ENCODE measurements at regions of chr5 and their contacts with region 1.

Region 1: GRCh38 chr5:40879163-40879942 is 29.9 kb upstream of the C7 start:
- DNase-seq: peak in 1 of 2 donors; percentile 47
- ATAC-seq: peak in 1 of 3 donors; percentile 59
- H3K4me3 ChIP-seq: no peak overlapping the region
- H3K4me3 Mint-ChIP-seq: no peak overlapping the region
- H3K27ac ChIP-seq: no peak overlapping the region
- H3K27ac Mint-ChIP-seq: no peak overlapping the region
- H3K4me1 ChIP-seq: no peaks in the 10 kb centered on the region
- H3K4me1 Mint-ChIP-seq: no peaks in the 10 kb centered on the region
- H3K27me3 ChIP-seq: no peaks in the 10 kb centered on the region
- H3K27me3 Mint-ChIP-seq: peaks cover 4 to 7% of the 10 kb centered on the region in 2 donors
- CTCF ChIP-seq: peak; percentile 85

Region 2: DNA sequence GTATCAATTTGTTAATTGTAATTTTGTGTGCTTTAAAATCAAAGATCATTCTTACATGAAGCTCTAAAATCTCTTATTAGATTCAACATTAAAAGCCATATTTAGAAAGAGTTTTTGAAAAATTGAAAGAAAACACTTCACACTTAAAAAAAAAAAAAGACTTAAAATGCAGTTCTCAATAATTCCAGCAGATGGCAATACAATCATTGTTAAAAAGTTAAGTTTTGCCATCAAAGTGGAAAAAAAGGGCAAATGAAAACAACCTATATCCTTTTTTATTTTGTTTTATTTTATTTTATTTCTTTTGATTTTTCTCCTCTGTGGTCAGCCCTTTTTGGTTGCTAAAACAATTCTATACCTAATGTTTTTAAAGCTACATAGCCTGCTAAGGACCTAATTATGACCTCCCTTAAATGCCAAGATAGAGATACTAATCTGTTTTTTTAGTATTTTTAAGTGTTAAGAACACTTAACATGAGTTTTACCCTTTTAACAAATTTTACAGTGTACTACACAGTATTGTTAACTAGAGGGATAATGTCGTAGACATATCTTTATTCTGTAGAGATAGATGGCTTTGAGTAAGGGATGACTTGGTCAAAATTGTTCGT is 1300.4 kb before region 1 on chr5:
- intact Hi-C with region 1: loop called (anchors 5 kb)
- DNase-seq: peak in 1 of 2 donors; percentile 57
- ATAC-seq: no peak
- H3K4me3 ChIP-seq: no peak overlapping the region
- H3K4me3 Mint-ChIP-seq: no peak overlapping the region
- H3K27ac ChIP-seq: no peak overlapping the region
- H3K27ac Mint-ChIP-seq: no peak overlapping the region
- H3K4me1 ChIP-seq: no peaks in the 10 kb centered on the region
- H3K4me1 Mint-ChIP-seq: no peaks in the 10 kb centered on the region
- H3K27me3 ChIP-seq: no peaks in the 10 kb centered on the region
- H3K27me3 Mint-ChIP-seq: peaks cover 5 to 22% of the 10 kb centered on the region in 2 donors
- CTCF ChIP-seq: peak; percentile 92

Region 3: DNA sequence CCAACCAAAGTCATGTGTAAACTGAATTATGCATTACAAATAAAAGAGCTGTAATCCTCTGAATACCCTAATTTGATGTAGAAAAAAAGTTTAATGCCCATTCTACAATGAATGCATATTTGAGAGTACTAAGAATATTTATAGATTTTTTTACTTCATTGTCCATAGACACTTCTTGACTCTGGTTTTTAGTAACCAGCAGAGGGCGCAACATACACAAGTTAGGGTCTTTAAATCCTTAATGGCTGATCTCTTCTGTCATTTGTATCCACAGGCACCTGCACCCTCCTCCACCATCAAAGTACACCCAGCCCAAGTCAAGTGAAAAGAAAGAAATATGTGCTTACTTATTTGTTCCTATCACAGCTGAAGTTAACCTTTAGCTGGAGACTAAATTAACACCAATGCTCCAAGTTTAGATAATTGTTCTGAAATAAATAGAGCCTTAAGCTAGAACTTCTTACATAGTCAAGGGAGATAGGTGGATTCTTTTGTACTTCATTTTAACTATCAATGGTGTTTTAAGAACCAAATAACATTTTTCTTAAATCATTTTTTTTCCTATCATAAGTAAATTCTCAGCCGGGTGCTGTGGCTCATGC is 930.4 kb before region 1 on chr5:
- intact Hi-C with region 1: loop called (anchors 2 kb)
- DNase-seq: peak; percentile 15 to 87
- ATAC-seq: peak; percentile 87 to 90 (median 89)
- H3K4me3 ChIP-seq: no peak overlapping the region
- H3K4me3 Mint-ChIP-seq: no peak overlapping the region
- H3K27ac ChIP-seq: no peak overlapping the region
- H3K27ac Mint-ChIP-seq: no peak overlapping the region
- H3K4me1 ChIP-seq: no peaks in the 10 kb centered on the region
- H3K4me1 Mint-ChIP-seq: peaks cover 0 to 4% of the 10 kb centered on the region in 2 donors
- H3K27me3 ChIP-seq: no peaks in the 10 kb centered on the region
- H3K27me3 Mint-ChIP-seq: no peaks in the 10 kb centered on the region
- CTCF ChIP-seq: peak; percentile 82

Region 4: DNA sequence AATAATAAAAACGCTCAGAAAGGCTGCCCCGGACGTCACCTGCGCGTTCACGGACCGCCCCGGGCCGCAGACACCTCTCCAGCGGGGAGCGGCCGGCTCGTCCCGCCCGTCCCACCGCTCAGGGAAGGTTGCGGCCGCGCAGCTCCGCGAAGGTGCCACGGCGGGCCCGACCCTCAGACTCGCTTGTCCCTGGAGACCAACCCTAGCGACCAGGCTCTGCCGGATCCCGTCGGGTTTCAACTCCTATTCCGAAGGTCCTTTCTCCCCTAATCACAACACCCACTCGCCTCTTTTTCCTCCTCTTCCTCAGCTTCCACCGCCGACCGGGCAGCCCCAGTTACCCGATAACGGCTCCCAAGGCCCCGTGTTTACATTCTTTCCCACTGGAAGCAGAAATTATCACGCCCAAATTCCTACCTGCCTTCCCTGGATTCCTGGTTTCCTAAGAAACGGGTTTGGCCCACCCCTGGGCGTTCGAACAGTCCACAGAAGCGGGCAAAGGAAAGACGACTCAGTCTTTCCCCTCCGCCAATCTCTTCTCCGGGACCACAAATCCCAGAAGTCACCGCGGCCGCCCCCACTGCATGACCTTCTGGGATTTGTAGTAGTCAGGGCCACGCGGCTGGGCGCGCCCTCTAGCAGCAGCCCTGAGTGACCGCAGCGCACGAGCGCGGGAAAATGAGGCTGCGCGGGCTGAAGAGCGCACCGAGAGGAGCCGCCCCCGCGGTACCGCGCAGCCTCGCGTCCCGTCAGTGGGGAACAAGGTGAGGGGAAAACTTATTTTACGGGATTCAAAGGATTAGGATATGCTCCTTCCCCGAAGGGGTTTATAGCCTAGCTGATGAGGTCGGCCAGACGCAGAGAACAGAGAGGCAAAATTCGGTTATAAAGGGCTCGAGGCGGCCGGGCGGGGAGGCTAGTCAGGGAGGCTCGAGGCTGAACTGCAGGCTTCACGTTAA is 123.7 kb before region 1 on chr5 and contains the start of gene TTC33:
- intact Hi-C with region 1: loop called (anchors 1 kb)
- DNase-seq: peak; percentile 89 to 95
- ATAC-seq: peak; percentile 90 to 97 (median 94)
- H3K4me3 ChIP-seq: peak within 1 kb of the TSS; percentile 75
- H3K4me3 Mint-ChIP-seq: no peak within 1 kb of the TSS
- H3K27ac ChIP-seq: peak within 1 kb of the TSS; percentile 68
- H3K27ac Mint-ChIP-seq: no peak within 1 kb of the TSS
- H3K4me1 ChIP-seq: peaks cover 5% of the 10 kb centered on the region
- H3K4me1 Mint-ChIP-seq: peaks cover 22 to 24% of the 10 kb centered on the region in 2 donors
- H3K27me3 ChIP-seq: no peaks in the 10 kb centered on the region
- H3K27me3 Mint-ChIP-seq: no peaks in the 10 kb centered on the region
- CTCF ChIP-seq: peak; percentile 57
- total RNA-seq, gene TTC33: 7.3 to 11.4 (median 10.0) TPM

Measured in natural killer cell (primary cell).